K562 (cell line): ENCODE measurements at regions of chrX and their contacts with region 1.

Region 1: DNA sequence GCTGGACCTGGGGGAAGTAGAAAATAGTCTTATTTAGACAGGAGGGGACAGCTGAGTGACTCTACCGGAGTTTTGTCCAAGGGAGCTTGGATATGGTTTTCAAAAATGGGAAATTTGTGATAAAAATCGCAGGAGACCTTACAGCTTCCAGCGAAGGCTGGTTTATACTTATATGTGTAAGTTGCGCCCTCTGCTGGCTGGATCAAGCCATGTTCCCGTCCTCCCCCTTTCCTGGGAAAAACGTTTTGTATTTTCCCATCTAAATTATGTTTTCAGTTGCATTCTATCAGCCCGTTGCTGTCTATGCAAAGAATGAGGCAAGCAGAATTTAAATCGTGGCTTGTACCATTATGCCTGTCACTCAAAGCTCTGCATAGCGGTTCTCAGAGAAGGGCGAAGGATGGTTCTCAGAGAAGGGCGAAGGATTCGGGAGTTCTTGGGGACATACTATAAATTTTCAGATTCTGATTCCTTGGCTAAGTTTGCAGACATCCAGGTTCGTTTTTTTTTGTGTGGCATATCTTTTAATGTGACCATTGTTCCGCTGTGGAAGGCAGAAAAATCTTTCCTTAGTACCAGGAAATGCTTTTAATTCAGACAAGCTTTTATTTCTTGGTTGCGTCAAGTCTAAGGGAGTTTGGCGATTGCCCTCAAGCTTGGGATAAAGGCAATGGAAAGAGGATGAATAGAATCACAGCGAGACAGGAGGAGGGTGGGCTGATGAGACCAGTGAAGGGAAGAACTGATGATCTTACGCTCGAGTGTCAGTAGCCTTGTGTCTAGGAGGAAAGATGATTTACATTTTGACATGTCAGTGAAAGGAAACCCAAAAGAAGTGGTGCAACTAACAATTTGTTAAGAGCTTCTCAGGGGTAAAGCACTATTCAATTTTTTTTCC is 128.5 kb upstream of the ARX start:
- DNase-seq: peak; percentile 23 to 58 (median 47)
- ATAC-seq: peak; percentile 82
- H3K4me3 ChIP-seq: no peak overlapping the region
- H3K27ac ChIP-seq: no peak overlapping the region
- H3K4me1 ChIP-seq: no peaks in the 10 kb centered on the region
- H3K27me3 ChIP-seq: no peaks in the 10 kb centered on the region
- CTCF ChIP-seq: peak; percentile 47 to 68 (median 67)
- EP300 ChIP-seq: no peak
- POLR2A ChIP-seq: no peak
- RAD21 ChIP-seq: peak; percentile 68 to 76

Region 2: GRCh38 chrX:24395775-24396174 is 748.5 kb before region 1 on chrX:
- CTCF ChIA-PET with region 1: no interaction called
- POLR2A ChIA-PET with region 1: interaction called, 4 read pairs
- in situ Hi-C with region 1: loop called (anchors 10 kb)
- intact Hi-C with region 1: loop called (anchors 10 kb)
- DNase-seq: peak; percentile 40 to 54 (median 50)
- ATAC-seq: peak; percentile 81
- H3K4me3 ChIP-seq: no peak overlapping the region
- H3K27ac ChIP-seq: no peak overlapping the region
- H3K4me1 ChIP-seq: no peaks in the 10 kb centered on the region
- H3K27me3 ChIP-seq: peaks cover 0 to 16% of the 10 kb centered on the region in 2 experiments; a peak in 3 of 5 replicates
- CTCF ChIP-seq: peak; percentile 67 to 85 (median 67)
- EP300 ChIP-seq: no peak
- POLR2A ChIP-seq: no peak
- RAD21 ChIP-seq: peak; percentile 82 to 89

Region 3: DNA sequence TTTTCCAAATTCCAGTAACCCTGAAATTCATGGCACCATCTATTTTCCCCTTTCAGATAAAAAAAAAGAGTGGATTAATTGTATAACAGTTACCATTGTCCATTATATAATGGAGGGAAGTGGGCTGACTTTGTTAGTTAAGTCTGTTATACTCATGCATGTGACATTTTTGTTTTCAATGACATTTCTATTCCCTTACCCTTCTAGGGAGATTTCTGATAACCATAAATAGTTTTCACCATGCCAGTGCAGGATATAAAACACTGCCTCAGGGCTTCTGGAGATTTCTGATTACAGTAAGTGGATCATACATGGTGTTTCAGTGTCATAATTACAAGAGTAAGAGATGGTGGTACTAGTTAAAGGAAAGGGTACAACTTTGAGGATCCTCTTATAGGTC is 738.3 kb before region 1 on chrX:
- CTCF ChIA-PET with region 1: no interaction called
- POLR2A ChIA-PET with region 1: no interaction called
- in situ Hi-C with region 1: loop called (anchors 10 kb)
- intact Hi-C with region 1: no loop called
- DNase-seq: no peak
- ATAC-seq: no peak
- H3K4me3 ChIP-seq: no peak overlapping the region
- H3K27ac ChIP-seq: no peak overlapping the region
- H3K4me1 ChIP-seq: no peaks in the 10 kb centered on the region
- H3K27me3 ChIP-seq: no peaks in the 10 kb centered on the region; a peak in 3 of 5 replicates
- CTCF ChIP-seq: no peak
- EP300 ChIP-seq: no peak
- POLR2A ChIP-seq: no peak
- RAD21 ChIP-seq: no peak

Region 4: GRCh38 chrX:24515447-24515846 is 628.8 kb before region 1 on chrX:
- CTCF ChIA-PET with region 1: no interaction called
- POLR2A ChIA-PET with region 1: no interaction called
- in situ Hi-C with region 1: no loop called
- intact Hi-C with region 1: loop called (anchors 10 kb)
- DNase-seq: peak in 1 of 4 experiments; percentile 6
- ATAC-seq: 0 out of 3 replicates have a peak, but pooled peaks have one; percentile 39
- H3K4me3 ChIP-seq: no peak overlapping the region
- H3K27ac ChIP-seq: no peak overlapping the region
- H3K4me1 ChIP-seq: no peaks in the 10 kb centered on the region
- H3K27me3 ChIP-seq: no peaks in the 10 kb centered on the region; a peak in 1 of 5 replicates
- CTCF ChIP-seq: peak in 2 of 3 experiments; percentile 39 to 40; a peak in 2 of 6 replicates
- EP300 ChIP-seq: no peak
- POLR2A ChIP-seq: no peak
- RAD21 ChIP-seq: peak in 1 of 2 experiments; percentile 60; a peak in 2 of 4 replicates

Region 5: GRCh38 chrX:24838629-24839028 is 305.7 kb before region 1 on chrX:
- CTCF ChIA-PET with region 1: interaction called, 3 read pairs
- POLR2A ChIA-PET with region 1: no interaction called
- in situ Hi-C with region 1: no loop called
- intact Hi-C with region 1: loop called (anchors 10 kb)
- DNase-seq: peak in 2 of 4 experiments; percentile 7 to 43
- ATAC-seq: peak; percentile 59; the same call in 2 of the 3 replicates
- H3K4me3 ChIP-seq: no peak overlapping the region
- H3K27ac ChIP-seq: no peak overlapping the region
- H3K4me1 ChIP-seq: no peaks in the 10 kb centered on the region
- H3K27me3 ChIP-seq: no peaks in the 10 kb centered on the region
- CTCF ChIP-seq: peak in 2 of 3 experiments; percentile 18 to 58; a peak in 3 of 6 replicates
- EP300 ChIP-seq: no peak
- POLR2A ChIP-seq: no peak
- RAD21 ChIP-seq: peak in 1 of 2 experiments; percentile 50; a peak in 3 of 4 replicates

Region 6: DNA sequence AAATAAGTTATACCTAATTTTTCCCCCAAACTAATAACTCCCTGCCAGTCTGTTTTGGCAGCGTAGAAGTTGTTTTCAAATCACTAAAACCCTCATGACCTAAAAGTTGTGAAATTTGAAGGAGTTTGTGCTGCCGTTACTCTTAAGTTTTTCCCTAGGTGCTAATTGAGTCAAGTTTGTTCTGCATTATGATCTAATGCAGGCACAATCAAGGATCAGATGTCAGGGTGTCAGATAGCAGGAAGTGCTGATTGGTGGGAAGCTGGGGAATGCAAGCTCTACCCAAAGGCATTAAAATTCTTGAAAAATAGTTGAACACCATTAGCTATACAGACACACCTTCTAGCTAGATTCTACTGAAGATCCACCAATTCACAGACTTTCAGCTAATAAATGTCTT is 180.5 kb before region 1 on chrX:
- CTCF ChIA-PET with region 1: no interaction called
- POLR2A ChIA-PET with region 1: no interaction called
- in situ Hi-C with region 1: no loop called
- intact Hi-C with region 1: no loop called
- DNase-seq: no peak
- ATAC-seq: no peak
- H3K4me3 ChIP-seq: no peak overlapping the region
- H3K27ac ChIP-seq: no peak overlapping the region
- H3K4me1 ChIP-seq: no peaks in the 10 kb centered on the region; a peak in 1 of 5 replicates
- H3K27me3 ChIP-seq: no peaks in the 10 kb centered on the region
- CTCF ChIP-seq: no peak
- EP300 ChIP-seq: no peak
- POLR2A ChIP-seq: no peak
- RAD21 ChIP-seq: no peak

Region 7: GRCh38 chrX:25020905-25021449 is 123.3 kb before region 1 on chrX:
- CTCF ChIA-PET with region 1: no interaction called
- POLR2A ChIA-PET with region 1: no interaction called
- in situ Hi-C with region 1: no loop called
- intact Hi-C with region 1: loop called (anchors 5 kb)
- DNase-seq: peak; percentile 43 to 78 (median 76)
- ATAC-seq: peak; percentile 93
- H3K4me3 ChIP-seq: no peak overlapping the region
- H3K27ac ChIP-seq: no peak overlapping the region
- H3K4me1 ChIP-seq: peaks cover 0 to 24% of the 10 kb centered on the region in 2 experiments; a peak in 3 of 5 replicates
- H3K27me3 ChIP-seq: peaks cover 26 to 51% of the 10 kb centered on the region in 2 experiments
- CTCF ChIP-seq: peak; percentile 61 to 77 (median 77)
- EP300 ChIP-seq: no peak
- POLR2A ChIP-seq: no peak
- RAD21 ChIP-seq: peak; percentile 41 to 64

Region 8: DNA sequence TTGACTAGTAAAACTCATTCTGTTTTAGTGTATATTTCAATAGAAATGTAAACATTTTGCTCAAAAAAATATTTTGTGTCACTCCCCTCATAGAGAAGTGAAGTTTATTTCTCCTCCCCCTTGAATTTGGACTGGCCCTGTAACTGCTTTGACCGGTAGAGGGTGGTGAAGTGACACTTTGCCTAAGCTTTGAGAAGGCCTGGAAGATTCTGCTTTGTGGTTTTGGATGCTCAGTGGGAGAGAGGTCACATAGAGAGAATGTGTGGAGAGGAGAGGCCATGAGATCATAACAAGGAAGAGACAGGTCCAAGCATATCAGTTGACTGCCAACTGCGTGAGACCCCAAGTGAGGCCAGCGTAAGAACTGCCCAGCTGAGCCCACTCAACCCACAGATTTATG is 109.4 kb before region 1 on chrX:
- CTCF ChIA-PET with region 1: interaction called, 7 read pairs
- POLR2A ChIA-PET with region 1: no interaction called
- in situ Hi-C with region 1: loop called (anchors 10 kb)
- intact Hi-C with region 1: loop called (anchors 1 kb)
- DNase-seq: peak in 1 of 4 experiments; percentile 29
- ATAC-seq: peak; percentile 75
- H3K4me3 ChIP-seq: no peak overlapping the region
- H3K27ac ChIP-seq: no peak overlapping the region
- H3K4me1 ChIP-seq: no peaks in the 10 kb centered on the region; a peak in 1 of 5 replicates
- H3K27me3 ChIP-seq: peaks cover 2 to 3% of the 10 kb centered on the region in 2 experiments; a peak in 3 of 5 replicates
- CTCF ChIP-seq: peak; percentile 44 to 61 (median 51); a peak in 5 of 6 replicates
- EP300 ChIP-seq: no peak
- POLR2A ChIP-seq: no peak
- RAD21 ChIP-seq: peak; percentile 47 to 66; a peak in 3 of 4 replicates

Region 9: DNA sequence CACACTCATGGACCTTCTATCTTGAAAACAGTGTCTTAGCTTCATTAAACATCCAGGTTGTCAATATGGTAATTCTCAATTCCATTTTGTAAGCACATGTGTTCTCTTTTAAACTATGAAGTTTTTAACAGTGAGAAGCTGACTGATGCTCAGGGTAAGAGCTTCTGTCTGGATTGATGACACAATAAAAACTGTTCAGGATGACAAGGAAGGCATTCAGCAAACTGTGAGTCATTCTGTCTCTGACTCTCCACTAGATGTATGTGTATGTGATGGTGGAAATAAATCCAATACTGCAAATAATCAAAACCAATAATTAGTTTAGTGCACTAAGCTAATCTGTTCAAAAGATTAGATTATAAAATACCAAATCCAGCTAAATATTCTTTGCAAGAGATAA is 13.2 kb before region 1 on chrX:
- CTCF ChIA-PET with region 1: no interaction called
- POLR2A ChIA-PET with region 1: no interaction called
- in situ Hi-C with region 1: no loop called
- intact Hi-C with region 1: no loop called
- DNase-seq: no peak
- ATAC-seq: no peak
- H3K4me3 ChIP-seq: no peak overlapping the region
- H3K27ac ChIP-seq: no peak overlapping the region
- H3K4me1 ChIP-seq: no peaks in the 10 kb centered on the region
- H3K27me3 ChIP-seq: no peaks in the 10 kb centered on the region
- CTCF ChIP-seq: no peak
- EP300 ChIP-seq: no peak
- POLR2A ChIP-seq: no peak
- RAD21 ChIP-seq: no peak